Naive thymus-derived CD4-positive, alpha-beta T cell (primary cell): ENCODE measurements at regions of chr10 and their contacts with region 1.

Region 1: DNA sequence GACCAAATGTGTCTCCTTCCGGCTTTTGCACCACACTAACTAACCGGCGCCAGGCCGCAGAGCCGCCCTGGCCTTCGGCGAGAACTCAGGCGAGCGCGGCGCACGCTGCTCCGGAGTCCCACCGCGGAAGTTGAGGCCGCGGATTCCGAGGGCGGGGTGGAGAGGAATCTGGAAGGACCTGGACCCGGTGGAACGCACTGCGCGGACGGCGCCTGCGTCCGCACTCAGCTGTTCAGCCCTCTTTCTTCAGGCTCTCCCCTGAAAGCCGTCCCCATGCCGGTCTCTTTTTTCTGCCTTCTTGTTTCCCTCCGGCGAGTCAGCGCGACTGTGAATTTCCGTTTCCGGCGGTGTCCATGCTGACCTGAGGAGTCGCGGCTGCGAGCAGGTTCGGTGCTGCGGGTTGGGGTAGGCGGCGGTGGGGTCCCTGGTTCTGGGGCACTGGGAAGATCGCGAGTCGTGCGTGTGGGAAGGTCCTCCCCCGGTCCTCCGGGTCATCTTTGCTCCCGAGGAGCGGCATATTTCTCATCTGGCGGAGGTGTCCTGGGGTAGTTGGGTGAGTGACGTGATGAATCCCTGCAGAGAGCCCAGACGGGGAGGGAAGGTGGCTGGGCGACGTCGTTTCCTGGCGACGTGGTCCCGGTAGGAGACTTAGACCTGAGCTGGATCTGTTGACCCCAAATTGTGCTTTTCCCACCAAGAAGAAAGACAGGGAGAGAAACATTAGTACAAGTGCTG is at the start of gene BMS1:
- DNase-seq: peak; percentile 78 to 91 (median 86)
- ATAC-seq: peak; percentile 95
- H3K4me3 ChIP-seq: peak within 1 kb of the TSS; percentile 86
- H3K4me3 Mint-ChIP-seq: peak within 1 kb of the TSS; percentile 89 to 100 (median 96)
- H3K27ac ChIP-seq: peak within 1 kb of the TSS; percentile 83
- H3K27ac Mint-ChIP-seq: peak within 1 kb of the TSS; percentile 88 to 98 (median 94)
- H3K4me1 ChIP-seq: peaks cover 0 to 13% of the 10 kb centered on the region in 2 donors
- H3K4me1 Mint-ChIP-seq: peaks cover 10 to 60% (median 45%) of the 10 kb centered on the region in 7 donors
- H3K27me3 ChIP-seq: no peaks in the 10 kb centered on the region
- H3K27me3 Mint-ChIP-seq: peaks cover 0 to 3% (median 0%) of the 10 kb centered on the region in 5 donors
- total RNA-seq, gene BMS1: 9.7 to 20.0 (median 16.9) TPM

Region 2: GRCh38 chr10:42552493-42553407 is 229.9 kb before region 1 on chr10:
- CTCF ChIA-PET with region 1: no interaction called
- POLR2A ChIA-PET with region 1: interaction called, 4 read pairs
- intact Hi-C with region 1: loop called (anchors 1 kb)
- DNase-seq: peak; percentile 83 to 92 (median 91)
- ATAC-seq: peak; percentile 98
- H3K4me3 ChIP-seq: peak overlapping the region; percentile 95
- H3K4me3 Mint-ChIP-seq: peak overlapping the region; percentile 96 to 100 (median 98)
- H3K27ac ChIP-seq: peak overlapping the region; percentile 87
- H3K27ac Mint-ChIP-seq: peak overlapping the region; percentile 86 to 98 (median 96)
- H3K4me1 ChIP-seq: peaks cover 0 to 16% of the 10 kb centered on the region in 2 donors
- H3K4me1 Mint-ChIP-seq: peaks cover 24 to 49% (median 45%) of the 10 kb centered on the region in 7 donors
- H3K27me3 ChIP-seq: no peaks in the 10 kb centered on the region
- H3K27me3 Mint-ChIP-seq: no peaks in the 10 kb centered on the region

Region 3: DNA sequence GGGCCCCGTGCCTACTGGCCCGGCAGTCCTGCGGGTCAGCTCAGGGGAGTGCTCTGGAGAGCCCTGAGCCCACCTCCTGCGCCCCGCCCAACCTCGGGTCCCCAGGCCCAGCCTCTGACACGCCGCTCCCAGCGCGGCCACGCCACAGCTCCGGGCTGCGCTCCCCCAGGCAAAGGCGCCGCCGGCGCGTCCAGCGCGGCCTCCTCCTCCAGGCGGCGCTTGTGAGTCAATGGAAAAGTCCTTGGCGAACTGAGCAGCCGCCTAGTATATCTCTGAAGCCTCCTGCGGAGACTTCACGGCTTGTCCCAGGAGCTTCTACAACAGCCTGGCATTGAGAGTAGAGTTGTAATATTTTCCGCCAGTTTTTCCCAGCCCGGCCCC is 29.5 kb before region 1 on chr10:
- CTCF ChIA-PET with region 1: no interaction called
- POLR2A ChIA-PET with region 1: no interaction called
- intact Hi-C with region 1: loop called (anchors 1 to 2 kb)
- DNase-seq: peak; percentile 8 to 79 (median 51)
- ATAC-seq: peak; percentile 75
- H3K4me3 ChIP-seq: peak overlapping the region; percentile 59
- H3K4me3 Mint-ChIP-seq: peak overlapping the region; percentile 70 to 89 (median 83)
- H3K27ac ChIP-seq: no peak overlapping the region
- H3K27ac Mint-ChIP-seq: no peak overlapping the region
- H3K4me1 ChIP-seq: peaks cover 0 to 6% of the 10 kb centered on the region in 2 donors
- H3K4me1 Mint-ChIP-seq: peaks cover 0 to 8% (median 4%) of the 10 kb centered on the region in 7 donors
- H3K27me3 ChIP-seq: peaks cover 0 to 10% of the 10 kb centered on the region in 2 donors
- H3K27me3 Mint-ChIP-seq: peaks cover 59 to 71% (median 67%) of the 10 kb centered on the region in 5 donors

Region 4: GRCh38 chr10:42816917-42817316 is 34.3 kb after region 1 on chr10:
- CTCF ChIA-PET with region 1: no interaction called
- POLR2A ChIA-PET with region 1: no interaction called
- intact Hi-C with region 1: no loop called
- DNase-seq: no peak
- ATAC-seq: no peak
- H3K4me3 ChIP-seq: no peak overlapping the region
- H3K4me3 Mint-ChIP-seq: no peak overlapping the region
- H3K27ac ChIP-seq: no peak overlapping the region
- H3K27ac Mint-ChIP-seq: peak overlapping the region in 1 of 9 donors; percentile 69
- H3K4me1 ChIP-seq: no peaks in the 10 kb centered on the region
- H3K4me1 Mint-ChIP-seq: peaks cover 5 to 38% (median 20%) of the 10 kb centered on the region in 7 donors
- H3K27me3 ChIP-seq: no peaks in the 10 kb centered on the region
- H3K27me3 Mint-ChIP-seq: no peaks in the 10 kb centered on the region

Region 5: GRCh38 chr10:43026011-43026973 is 243.7 kb after region 1 on chr10:
- CTCF ChIA-PET with region 1: no interaction called
- POLR2A ChIA-PET with region 1: no interaction called
- intact Hi-C with region 1: no loop called
- DNase-seq: no peak
- ATAC-seq: no peak
- H3K4me3 ChIP-seq: no peak overlapping the region
- H3K4me3 Mint-ChIP-seq: no peak overlapping the region
- H3K27ac ChIP-seq: no peak overlapping the region
- H3K27ac Mint-ChIP-seq: no peak overlapping the region
- H3K4me1 ChIP-seq: no peaks in the 10 kb centered on the region
- H3K4me1 Mint-ChIP-seq: no peaks in the 10 kb centered on the region
- H3K27me3 ChIP-seq: no peaks in the 10 kb centered on the region
- H3K27me3 Mint-ChIP-seq: peaks cover 0 to 24% (median 14%) of the 10 kb centered on the region in 5 donors